ENCODE measurements at regions of chr2 and their contacts with region 1.

Region 1: GRCh38 chr2:220687231-220687843 is 884.8 kb downstream of the EPHA4 start:
- DNase-seq: peak; percentile 50 to 74
- ATAC-seq: peak; percentile 78 to 91 (median 87)
- H3K4me3 ChIP-seq: no peak overlapping the region
- H3K27ac ChIP-seq: no peak overlapping the region
- H3K4me1 ChIP-seq: peaks cover 0 to 6% (median 0%) of the 10 kb centered on the region in 9 donors
- H3K27me3 ChIP-seq: no peaks in the 10 kb centered on the region
- CTCF ChIP-seq: peak; percentile 79 to 93 (median 90)

Region 2: DNA sequence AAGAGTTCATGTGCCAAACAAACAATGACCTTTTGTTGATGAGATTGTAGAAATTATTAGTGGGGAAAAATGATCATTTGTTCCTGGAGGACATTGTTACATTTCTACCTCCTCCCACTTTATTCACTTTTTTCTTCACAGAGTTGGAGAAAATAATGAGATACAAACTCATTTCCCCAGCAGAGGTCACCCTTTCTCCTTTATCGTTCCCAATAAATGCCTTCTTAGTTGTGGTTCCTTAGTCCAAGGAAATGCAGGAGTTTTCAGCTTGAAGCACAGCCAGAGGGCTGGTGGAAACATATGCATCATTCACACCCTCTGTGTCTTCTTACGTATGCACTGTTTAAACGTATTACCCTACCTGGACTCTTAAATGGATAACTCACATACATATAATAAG is 951.1 kb before region 1 on chr2:
- intact Hi-C with region 1: loop called in 1 of 10 experiments (anchors 10 kb)
- DNase-seq: peak in 1 of 2 donors; percentile 30
- ATAC-seq: peak in 7 of 8 donors; percentile 50 to 77 (median 65)
- H3K4me3 ChIP-seq: no peak overlapping the region
- H3K27ac ChIP-seq: no peak overlapping the region
- H3K4me1 ChIP-seq: peaks cover 0 to 23% (median 3%) of the 10 kb centered on the region in 9 donors
- H3K27me3 ChIP-seq: no peaks in the 10 kb centered on the region
- CTCF ChIP-seq: peak in 8 of 9 donors; percentile 18 to 70 (median 58)

Region 3: GRCh38 chr2:221085341-221085900 is 398.1 kb after region 1 on chr2:
- intact Hi-C with region 1: loop called in 1 of 10 experiments (anchors 10 kb)
- DNase-seq: no peak
- ATAC-seq: no peak
- H3K4me3 ChIP-seq: no peak overlapping the region
- H3K27ac ChIP-seq: no peak overlapping the region
- H3K4me1 ChIP-seq: peaks cover 0 to 11% (median 0%) of the 10 kb centered on the region in 9 donors
- H3K27me3 ChIP-seq: no peaks in the 10 kb centered on the region
- CTCF ChIP-seq: no peak

Region 4: GRCh38 chr2:221104361-221104811 is 417.0 kb after region 1 on chr2:
- intact Hi-C with region 1: loop called in 8 of 10 experiments (anchors 5 to 10 kb)
- DNase-seq: peak; percentile 84 to 85
- ATAC-seq: peak; percentile 93 to 99 (median 98)
- H3K4me3 ChIP-seq: peak overlapping the region in 7 of 10 donors; percentile 8 to 36 (median 13)
- H3K27ac ChIP-seq: peak overlapping the region in 9 of 10 donors; percentile 30 to 80 (median 71)
- H3K4me1 ChIP-seq: peaks cover 10 to 31% (median 21%) of the 10 kb centered on the region in 9 donors
- H3K27me3 ChIP-seq: peaks cover 0 to 2% (median 0%) of the 10 kb centered on the region in 7 donors
- CTCF ChIP-seq: peak in 7 of 9 donors; percentile 11 to 49 (median 34)

Region 5: DNA sequence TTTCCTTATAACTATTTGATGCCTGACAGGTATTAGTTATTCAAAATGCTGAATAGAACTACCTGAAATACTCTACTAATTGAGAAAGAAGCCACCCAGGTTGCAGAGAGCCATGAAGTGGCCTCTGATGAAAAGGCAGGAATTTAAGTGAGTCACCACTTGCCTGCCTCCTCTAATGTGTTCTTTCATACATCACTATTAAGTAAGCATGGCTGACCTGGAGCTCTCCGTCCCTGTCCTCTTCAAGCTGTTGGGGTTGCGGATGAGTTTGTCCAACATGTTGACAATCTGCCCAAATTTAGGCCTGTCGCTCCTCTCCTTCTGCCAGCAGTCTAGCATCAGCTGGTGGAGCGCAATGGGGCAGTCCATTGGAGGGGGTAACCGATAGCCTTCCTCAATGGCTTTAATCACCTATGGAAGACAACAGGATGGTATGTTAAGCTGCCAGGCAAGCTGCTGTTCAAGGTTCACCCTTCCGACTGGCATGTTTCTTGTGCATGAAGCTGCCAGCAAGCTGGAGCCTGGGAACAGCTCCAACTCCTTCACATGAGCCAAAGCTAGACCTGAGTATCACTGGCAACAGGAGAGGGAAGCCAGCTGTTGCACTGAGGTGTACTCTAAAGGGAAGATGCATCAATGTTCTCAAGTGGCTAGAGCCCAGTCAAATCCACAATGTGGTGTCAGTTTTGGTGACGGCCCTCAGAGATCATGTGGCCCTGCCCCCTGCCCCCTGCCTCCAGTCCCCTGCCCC is 742.6 kb after region 1 on chr2:
- intact Hi-C with region 1: loop called in 2 of 10 experiments (anchors 10 kb)
- DNase-seq: peak; percentile 23 to 31
- ATAC-seq: peak in 6 of 8 donors; percentile 29 to 87 (median 70)
- H3K4me3 ChIP-seq: no peak overlapping the region
- H3K27ac ChIP-seq: no peak overlapping the region
- H3K4me1 ChIP-seq: peaks cover 0 to 8% (median 0%) of the 10 kb centered on the region in 9 donors
- H3K27me3 ChIP-seq: no peaks in the 10 kb centered on the region
- CTCF ChIP-seq: no peak

Region 6: GRCh38 chr2:221969087-221969829 is 1281.9 kb after region 1 on chr2:
- intact Hi-C with region 1: loop called in 3 of 10 experiments (anchors 5 to 10 kb)
- DNase-seq: no peak
- ATAC-seq: peak in 3 of 8 donors; percentile 53 to 60 (median 56)
- H3K4me3 ChIP-seq: no peak overlapping the region
- H3K27ac ChIP-seq: no peak overlapping the region
- H3K4me1 ChIP-seq: no peaks in the 10 kb centered on the region
- H3K27me3 ChIP-seq: peaks cover 0 to 34% (median 6%) of the 10 kb centered on the region in 7 donors
- CTCF ChIP-seq: peak; percentile 11 to 78 (median 65)